Heart right ventricle (tissue), 16 donors: ENCODE measurements at regions of chr2 and their contacts with region 1.

Region 1: GRCh38 chr2:65064728-65065552 is 8.7 kb downstream of the CEP68 start:
- DNase-seq: peak; percentile 53 to 62
- ATAC-seq: peak; percentile 62 to 81 (median 72)
- H3K4me3 ChIP-seq: peak overlapping the region in 2 of 10 donors; percentile 10 to 12
- H3K27ac ChIP-seq: peak overlapping the region in 8 of 10 donors; percentile 5 to 86 (median 40)
- H3K4me1 ChIP-seq: peaks cover 29 to 100% (median 82%) of the 10 kb centered on the region in 9 donors
- H3K27me3 ChIP-seq: no peaks in the 10 kb centered on the region
- CTCF ChIP-seq: peak; percentile 44 to 79 (median 68)

Region 2: DNA sequence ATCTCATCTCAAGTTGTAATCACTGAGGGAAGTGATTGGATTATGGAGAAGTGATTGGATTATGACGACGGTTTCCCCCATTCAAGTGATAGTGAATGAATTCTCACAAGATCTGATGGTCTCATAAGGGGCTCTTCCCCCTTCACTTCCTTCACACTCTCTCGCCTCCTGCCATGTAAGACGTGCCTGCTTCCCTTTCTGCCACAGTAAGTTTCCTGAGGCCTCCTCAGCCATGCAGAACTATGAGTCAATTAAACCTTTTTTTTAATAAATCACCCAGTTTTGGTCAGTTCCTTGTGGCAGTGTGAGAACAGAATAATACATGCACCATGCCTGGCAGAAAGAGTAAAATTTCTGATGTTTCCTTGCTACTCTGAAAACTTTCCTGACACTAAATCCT is 27.9 kb after region 1 on chr2:
- intact Hi-C with region 1: no loop called
- DNase-seq: no peak
- ATAC-seq: no peak
- H3K4me3 ChIP-seq: no peak overlapping the region
- H3K27ac ChIP-seq: no peak overlapping the region
- H3K4me1 ChIP-seq: peaks cover 0 to 27% (median 17%) of the 10 kb centered on the region in 9 donors
- H3K27me3 ChIP-seq: no peaks in the 10 kb centered on the region
- CTCF ChIP-seq: no peak

Region 3: GRCh38 chr2:65164426-65164891 is 99.5 kb after region 1 on chr2:
- intact Hi-C with region 1: loop called in 6 of 10 experiments (anchors 2 to 5 kb)
- DNase-seq: peak in 1 of 2 donors; percentile 48
- ATAC-seq: peak; percentile 62 to 93 (median 84)
- H3K4me3 ChIP-seq: no peak overlapping the region
- H3K27ac ChIP-seq: peak overlapping the region in 9 of 10 donors; percentile 18 to 73 (median 50)
- H3K4me1 ChIP-seq: peaks cover 6 to 33% (median 19%) of the 10 kb centered on the region in 9 donors
- H3K27me3 ChIP-seq: no peaks in the 10 kb centered on the region
- CTCF ChIP-seq: no peak

Region 4: DNA sequence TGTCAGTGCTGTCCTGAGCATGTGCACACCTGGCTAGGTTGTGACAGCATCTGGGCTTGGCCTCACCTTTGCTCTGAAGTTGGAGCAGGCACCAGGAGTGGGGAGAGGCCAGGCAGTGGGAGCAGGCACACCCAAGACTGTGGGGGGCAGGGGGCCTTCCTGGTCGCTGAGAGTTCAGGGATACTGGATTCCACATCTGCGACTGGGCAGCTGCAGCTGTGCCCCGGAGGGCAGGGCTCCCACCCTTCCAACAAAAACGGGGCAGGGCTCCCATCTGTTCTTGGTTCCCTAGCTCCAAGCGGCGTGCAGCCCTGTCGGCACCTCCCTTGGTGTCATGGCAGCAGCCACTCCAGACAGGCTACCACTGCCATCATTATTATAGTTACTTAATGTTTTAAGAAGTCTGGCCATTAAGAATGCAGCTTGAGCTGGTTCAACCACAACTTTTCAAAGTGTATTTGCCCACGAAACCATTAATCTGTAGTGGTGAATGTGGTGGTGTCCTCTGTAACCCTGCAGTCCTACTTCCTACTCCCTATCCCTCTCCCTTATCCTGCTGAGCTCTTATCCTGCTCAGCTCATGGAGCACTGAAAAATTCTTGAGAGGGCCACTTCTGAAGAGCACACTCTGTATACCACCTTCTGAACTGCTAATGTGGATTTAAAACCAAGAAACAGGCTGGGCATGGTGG is 113.0 kb after region 1 on chr2:
- intact Hi-C with region 1: loop called in 1 of 10 experiments (anchors 10 kb)
- DNase-seq: no peak
- ATAC-seq: no peak
- H3K4me3 ChIP-seq: no peak overlapping the region
- H3K27ac ChIP-seq: no peak overlapping the region
- H3K4me1 ChIP-seq: no peaks in the 10 kb centered on the region
- H3K27me3 ChIP-seq: no peaks in the 10 kb centered on the region
- CTCF ChIP-seq: no peak

Region 5: DNA sequence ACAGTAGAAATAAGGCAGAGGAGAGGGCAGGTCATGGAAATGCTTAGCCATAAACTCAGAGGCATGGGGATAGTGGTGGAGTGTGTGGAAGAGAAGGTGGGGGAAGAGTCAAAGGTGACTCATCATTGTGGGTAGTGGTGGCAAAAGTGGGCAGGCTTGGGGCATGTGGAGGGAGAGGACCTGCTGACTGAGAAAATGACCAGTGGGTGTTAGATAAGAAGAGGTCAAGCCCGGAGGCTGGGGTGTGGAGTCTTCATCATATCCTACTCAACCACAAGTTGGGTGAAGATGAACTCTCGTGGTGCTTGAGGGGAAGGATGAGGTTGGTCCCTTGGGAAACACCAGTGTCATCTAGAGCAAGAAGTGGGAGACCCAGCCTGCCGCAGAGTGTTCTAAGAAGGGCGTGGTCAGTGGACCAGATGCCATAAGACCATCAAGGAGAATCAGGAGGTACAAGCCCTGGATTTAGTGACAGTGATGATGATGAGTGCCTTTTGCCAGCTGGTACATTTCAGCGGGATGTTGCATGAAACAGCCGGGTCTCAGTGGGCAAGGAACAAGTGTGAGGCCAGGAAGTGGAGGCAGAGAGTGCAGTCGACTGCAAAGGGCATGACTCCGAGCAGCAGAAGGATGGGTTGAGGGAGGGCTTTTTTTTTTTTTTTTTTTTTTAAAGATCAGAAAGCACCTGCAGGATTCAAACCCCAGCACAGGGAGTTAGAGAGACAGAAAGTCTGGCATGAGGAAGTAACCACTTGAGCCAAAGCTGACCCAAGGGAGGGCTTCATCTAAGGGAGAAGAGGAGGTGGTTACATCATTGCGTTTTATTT is 490.0 kb after region 1 on chr2:
- intact Hi-C with region 1: loop called in 1 of 10 experiments (anchors 10 kb)
- DNase-seq: no peak
- ATAC-seq: no peak
- H3K4me3 ChIP-seq: no peak overlapping the region
- H3K27ac ChIP-seq: no peak overlapping the region
- H3K4me1 ChIP-seq: peaks cover 0 to 9% (median 4%) of the 10 kb centered on the region in 9 donors
- H3K27me3 ChIP-seq: no peaks in the 10 kb centered on the region
- CTCF ChIP-seq: no peak